WTC11 (cell line): ENCODE measurements at regions of chr1 and their contacts with region 1.

Region 1: DNA sequence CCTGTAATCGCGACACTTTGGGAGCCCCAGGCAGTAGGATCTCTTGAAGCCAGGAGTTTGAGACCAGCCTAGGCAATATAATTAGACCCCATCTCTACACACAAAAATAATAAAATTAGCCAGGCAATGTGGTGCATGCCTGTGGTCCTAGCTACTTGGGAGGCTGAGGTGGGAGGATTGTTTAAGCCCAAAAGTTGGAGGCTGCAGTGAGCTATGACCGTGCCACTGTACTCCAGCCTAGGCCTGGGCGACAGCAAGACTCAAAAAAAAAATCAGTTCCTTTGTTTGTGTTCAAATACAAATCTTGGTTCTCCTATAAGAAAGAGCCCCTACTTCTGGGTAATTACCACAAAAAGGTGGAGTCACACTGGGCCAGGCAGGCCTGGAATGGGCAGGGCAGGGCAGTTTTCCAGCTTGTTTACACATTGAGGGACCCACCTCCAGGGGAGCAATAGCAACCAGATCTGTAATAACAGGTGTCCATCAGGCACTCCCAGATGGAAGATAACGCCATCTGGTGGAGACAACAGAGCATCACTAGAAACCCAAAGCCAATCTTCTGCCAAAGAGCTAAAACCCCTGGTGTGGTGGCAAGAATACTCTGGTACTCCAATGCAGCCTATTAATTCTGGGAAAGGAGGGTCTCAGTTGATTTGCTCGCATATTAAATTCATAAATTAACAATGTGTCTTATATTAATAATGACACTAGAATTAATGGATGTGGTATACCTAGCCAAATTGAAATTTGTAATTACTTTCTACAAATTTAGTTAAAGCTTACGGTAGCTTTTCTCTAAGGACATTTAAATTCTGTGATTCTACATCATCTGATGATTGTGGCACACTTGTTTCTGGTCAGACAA is 13.2 kb downstream of the PPP1R15B start:
- DNase-seq: peak; percentile 81
- ATAC-seq: peak; percentile 100
- H3K4me3 Mint-ChIP-seq: no peak overlapping the region
- H3K27ac Mint-ChIP-seq: no peak overlapping the region
- H3K4me1 Mint-ChIP-seq: no peaks in the 10 kb centered on the region
- H3K27me3 Mint-ChIP-seq: no peaks in the 10 kb centered on the region; the same call in 1 of the 2 replicates
- CTCF ChIP-seq: peak; percentile 72

Region 2: GRCh38 chr1:204190212-204191211 is 207.9 kb before region 1 on chr1:
- CTCF ChIA-PET with region 1: interaction called, 17 read pairs
- POLR2A ChIA-PET with region 1: no interaction called
- DNase-seq: peak; percentile 75
- ATAC-seq: peak; percentile 78
- H3K4me3 Mint-ChIP-seq: peak overlapping the region; percentile 61
- H3K27ac Mint-ChIP-seq: no peak overlapping the region
- H3K4me1 Mint-ChIP-seq: peaks cover 8% of the 10 kb centered on the region
- H3K27me3 Mint-ChIP-seq: peaks cover 66% of the 10 kb centered on the region
- CTCF ChIP-seq: no peak

Region 3: GRCh38 chr1:204257954-204258752 is 140.3 kb before region 1 on chr1:
- CTCF ChIA-PET with region 1: interaction called, 28 read pairs
- POLR2A ChIA-PET with region 1: no interaction called
- DNase-seq: peak; percentile 86
- ATAC-seq: peak; percentile 71
- H3K4me3 Mint-ChIP-seq: no peak overlapping the region
- H3K27ac Mint-ChIP-seq: no peak overlapping the region
- H3K4me1 Mint-ChIP-seq: peaks cover 36% of the 10 kb centered on the region
- H3K27me3 Mint-ChIP-seq: no peaks in the 10 kb centered on the region
- CTCF ChIP-seq: peak; percentile 57

Region 4: GRCh38 chr1:204368996-204369726 is 29.3 kb before region 1 on chr1:
- CTCF ChIA-PET with region 1: interaction called, 37 read pairs
- POLR2A ChIA-PET with region 1: interaction called, 4 read pairs
- DNase-seq: no peak
- ATAC-seq: no peak
- H3K4me3 Mint-ChIP-seq: no peak overlapping the region
- H3K27ac Mint-ChIP-seq: no peak overlapping the region
- H3K4me1 Mint-ChIP-seq: no peaks in the 10 kb centered on the region
- H3K27me3 Mint-ChIP-seq: no peaks in the 10 kb centered on the region; the same call in none of the 2 replicates
- CTCF ChIP-seq: no peak

Region 5: DNA sequence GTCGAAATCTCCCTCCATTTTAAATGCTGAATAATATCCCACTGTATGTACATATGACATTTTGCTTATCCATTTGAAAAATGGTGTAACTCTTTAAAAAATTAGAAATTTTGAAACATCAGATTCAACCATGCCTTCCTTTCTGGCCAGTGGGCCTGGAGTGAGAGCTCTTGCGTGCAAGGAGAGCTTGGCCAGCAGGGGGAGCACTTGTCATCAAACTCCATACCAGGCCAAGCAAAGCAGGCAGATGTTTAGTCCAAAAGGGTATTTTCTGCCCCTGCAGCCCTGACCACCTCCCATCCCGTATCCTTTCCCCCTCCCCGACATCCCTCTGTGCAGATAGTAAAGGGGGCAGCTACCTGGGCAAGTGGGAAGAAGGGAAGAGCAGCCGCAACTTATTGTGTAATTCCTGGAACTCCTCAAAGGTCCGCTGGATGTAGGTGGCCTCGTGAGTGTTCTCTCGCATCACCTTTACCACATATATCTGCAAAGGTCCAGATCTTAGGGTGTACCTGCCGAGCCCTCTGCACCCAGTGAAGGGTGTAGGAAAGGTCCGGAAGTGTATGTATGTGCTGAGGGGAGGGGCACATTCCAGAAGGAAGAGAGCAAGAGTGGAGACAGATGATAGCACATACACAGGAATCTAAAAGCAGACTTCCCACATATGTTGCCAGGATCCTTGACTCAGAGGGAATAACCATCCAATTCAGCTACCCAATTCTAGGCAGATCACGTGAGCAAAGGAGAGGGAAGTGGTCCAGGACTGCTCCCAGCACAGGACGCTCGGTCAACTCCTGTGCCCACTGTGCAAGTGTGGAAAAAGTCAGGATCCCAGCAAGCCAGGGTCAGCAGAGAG is 33.1 kb after region 1 on chr1:
- CTCF ChIA-PET with region 1: interaction called, 17 read pairs
- POLR2A ChIA-PET with region 1: no interaction called
- DNase-seq: peak; percentile 84
- ATAC-seq: peak; percentile 90
- H3K4me3 Mint-ChIP-seq: no peak overlapping the region
- H3K27ac Mint-ChIP-seq: peak overlapping the region; percentile 69; the same call in 1 of the 2 replicates
- H3K4me1 Mint-ChIP-seq: no peaks in the 10 kb centered on the region
- H3K27me3 Mint-ChIP-seq: no peaks in the 10 kb centered on the region
- CTCF ChIP-seq: peak; percentile 89

Region 6: GRCh38 chr1:204506961-204507387 is 108.5 kb after region 1 on chr1:
- CTCF ChIA-PET with region 1: interaction called, 19 read pairs
- POLR2A ChIA-PET with region 1: no interaction called
- DNase-seq: peak; percentile 84
- ATAC-seq: peak; percentile 75
- H3K4me3 Mint-ChIP-seq: peak overlapping the region; percentile 96
- H3K27ac Mint-ChIP-seq: peak overlapping the region; percentile 98
- H3K4me1 Mint-ChIP-seq: peaks cover 11% of the 10 kb centered on the region
- H3K27me3 Mint-ChIP-seq: peaks cover 3% of the 10 kb centered on the region; the same call in 1 of the 2 replicates
- CTCF ChIP-seq: no peak

Region 7: DNA sequence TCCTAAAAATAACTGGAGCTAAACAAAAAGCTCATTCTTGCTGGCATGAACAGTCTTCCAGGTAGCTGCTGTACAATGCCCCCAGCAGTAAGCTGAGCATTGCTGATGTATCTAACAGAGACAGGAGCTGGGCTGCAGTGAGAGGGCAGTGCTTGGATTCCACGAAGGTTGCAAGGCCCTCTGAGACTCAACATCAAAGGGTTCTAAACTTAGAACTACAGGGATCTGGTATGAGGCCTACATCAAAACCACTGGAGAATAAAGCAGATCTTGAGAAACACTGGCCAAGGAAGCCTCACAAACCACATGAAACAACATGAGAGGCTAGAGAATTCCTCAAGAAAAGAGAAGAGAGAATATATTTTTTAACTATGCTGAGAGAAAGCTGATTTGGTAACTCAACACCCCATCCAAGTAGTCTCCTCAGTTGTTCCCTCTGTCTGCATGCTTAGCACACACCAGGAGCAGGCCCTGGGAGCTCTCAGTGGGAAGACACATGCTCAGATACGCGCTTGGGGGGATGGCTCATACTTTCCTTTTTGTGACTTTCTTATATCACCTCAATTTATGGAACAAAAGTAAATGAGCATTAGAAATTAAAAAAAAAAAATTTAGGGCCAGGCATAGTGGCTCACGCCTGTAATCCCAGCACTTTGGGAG is 785.4 kb after region 1 on chr1:
- CTCF ChIA-PET with region 1: no interaction called
- POLR2A ChIA-PET with region 1: no interaction called
- DNase-seq: no peak
- ATAC-seq: no peak
- H3K4me3 Mint-ChIP-seq: no peak overlapping the region
- H3K27ac Mint-ChIP-seq: peak overlapping the region; percentile 84
- H3K4me1 Mint-ChIP-seq: peaks cover 24% of the 10 kb centered on the region
- H3K27me3 Mint-ChIP-seq: no peaks in the 10 kb centered on the region
- CTCF ChIP-seq: no peak